ENCODE measurements at regions of chr10 and their contacts with region 1.

Region 1: GRCh38 chr10:88835096-88835909 is 16.3 kb downstream of the ANKRD22 start:
- DNase-seq: peak; percentile 95
- H3K4me3 Mint-ChIP-seq: no peak overlapping the region
- H3K27ac Mint-ChIP-seq: no peak overlapping the region
- H3K4me1 Mint-ChIP-seq: peaks cover 20% of the 10 kb centered on the region
- H3K27me3 Mint-ChIP-seq: no peaks in the 10 kb centered on the region

Region 2: GRCh38 chr10:88095223-88095721 is 740.0 kb before region 1 on chr10:
- CTCF ChIA-PET with region 1: no interaction called
- intact Hi-C with region 1: no loop called
- DNase-seq: no peak
- H3K4me3 Mint-ChIP-seq: no peak overlapping the region
- H3K27ac Mint-ChIP-seq: no peak overlapping the region
- H3K4me1 Mint-ChIP-seq: peaks cover 29% of the 10 kb centered on the region
- H3K27me3 Mint-ChIP-seq: peaks cover 20% of the 10 kb centered on the region

Region 3: GRCh38 chr10:88456730-88457129 is 378.6 kb before region 1 on chr10:
- CTCF ChIA-PET with region 1: no interaction called
- intact Hi-C with region 1: no loop called
- DNase-seq: no peak
- H3K4me3 Mint-ChIP-seq: no peak overlapping the region
- H3K27ac Mint-ChIP-seq: no peak overlapping the region
- H3K4me1 Mint-ChIP-seq: peaks cover 2% of the 10 kb centered on the region
- H3K27me3 Mint-ChIP-seq: no peaks in the 10 kb centered on the region

Region 4: DNA sequence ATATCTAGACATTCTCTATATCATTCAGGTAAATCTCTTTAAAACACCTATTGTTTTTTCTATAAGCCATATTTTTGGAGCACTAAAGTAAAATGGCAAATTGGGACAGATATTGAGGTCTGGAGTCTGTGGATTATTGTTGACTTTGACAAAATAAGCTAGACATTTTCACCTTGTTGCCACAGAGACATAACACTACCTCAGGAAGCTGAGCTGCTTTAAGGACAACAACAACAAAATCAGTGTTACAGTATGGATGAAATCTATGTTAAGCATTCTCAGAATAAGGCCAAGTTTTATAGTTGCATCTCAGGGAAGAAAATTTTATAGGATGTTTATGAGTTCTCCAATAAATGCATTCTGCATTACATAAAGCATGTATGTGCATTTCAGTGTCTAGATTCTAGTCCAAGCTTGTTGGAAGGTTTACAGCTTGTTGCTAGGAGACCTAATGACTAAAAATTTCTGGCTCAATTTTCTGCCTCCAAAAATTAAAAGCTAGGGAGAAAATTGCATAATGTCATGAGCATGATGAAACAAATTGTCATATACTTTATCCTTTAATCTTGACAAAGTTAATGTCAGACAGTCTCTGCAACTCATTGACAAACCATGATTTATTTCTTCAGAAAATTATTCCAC is 14.4 kb before region 1 on chr10:
- CTCF ChIA-PET with region 1: interaction called, 45 read pairs
- intact Hi-C with region 1: no loop called
- DNase-seq: no peak
- H3K4me3 Mint-ChIP-seq: no peak overlapping the region
- H3K27ac Mint-ChIP-seq: no peak overlapping the region
- H3K4me1 Mint-ChIP-seq: peaks cover 27% of the 10 kb centered on the region
- H3K27me3 Mint-ChIP-seq: no peaks in the 10 kb centered on the region

Region 5: DNA sequence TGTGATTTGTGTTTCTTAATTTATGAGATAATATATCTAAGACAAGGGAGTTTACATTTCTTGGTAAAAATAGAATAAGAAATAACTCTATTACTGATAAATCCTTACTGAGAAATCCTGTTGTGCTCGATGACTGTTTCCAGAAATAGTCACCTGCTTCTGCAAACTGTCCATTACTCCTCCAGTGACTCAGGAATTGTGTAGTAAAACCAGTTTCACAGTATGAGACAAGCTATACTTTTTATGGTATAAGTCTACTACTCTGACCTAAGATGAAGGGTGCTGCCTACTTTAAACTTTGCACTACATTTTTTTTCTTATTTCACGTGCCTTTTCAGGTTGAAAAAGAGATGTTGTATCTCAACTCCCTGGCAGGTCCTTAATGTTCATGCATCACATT is 23.2 kb after region 1 on chr10:
- CTCF ChIA-PET with region 1: interaction called, 21 read pairs
- intact Hi-C with region 1: no loop called
- DNase-seq: no peak
- H3K4me3 Mint-ChIP-seq: no peak overlapping the region
- H3K27ac Mint-ChIP-seq: no peak overlapping the region
- H3K4me1 Mint-ChIP-seq: peaks cover 4% of the 10 kb centered on the region
- H3K27me3 Mint-ChIP-seq: peaks cover 10% of the 10 kb centered on the region

Region 6: GRCh38 chr10:88880282-88881076 is 45.2 kb after region 1 on chr10:
- CTCF ChIA-PET with region 1: interaction called, 26 read pairs
- intact Hi-C with region 1: loop called (anchors 1 kb)
- DNase-seq: peak; percentile 82
- H3K4me3 Mint-ChIP-seq: peak overlapping the region; percentile 95
- H3K27ac Mint-ChIP-seq: peak overlapping the region; percentile 97
- H3K4me1 Mint-ChIP-seq: peaks cover 58% of the 10 kb centered on the region
- H3K27me3 Mint-ChIP-seq: no peaks in the 10 kb centered on the region

Region 7: DNA sequence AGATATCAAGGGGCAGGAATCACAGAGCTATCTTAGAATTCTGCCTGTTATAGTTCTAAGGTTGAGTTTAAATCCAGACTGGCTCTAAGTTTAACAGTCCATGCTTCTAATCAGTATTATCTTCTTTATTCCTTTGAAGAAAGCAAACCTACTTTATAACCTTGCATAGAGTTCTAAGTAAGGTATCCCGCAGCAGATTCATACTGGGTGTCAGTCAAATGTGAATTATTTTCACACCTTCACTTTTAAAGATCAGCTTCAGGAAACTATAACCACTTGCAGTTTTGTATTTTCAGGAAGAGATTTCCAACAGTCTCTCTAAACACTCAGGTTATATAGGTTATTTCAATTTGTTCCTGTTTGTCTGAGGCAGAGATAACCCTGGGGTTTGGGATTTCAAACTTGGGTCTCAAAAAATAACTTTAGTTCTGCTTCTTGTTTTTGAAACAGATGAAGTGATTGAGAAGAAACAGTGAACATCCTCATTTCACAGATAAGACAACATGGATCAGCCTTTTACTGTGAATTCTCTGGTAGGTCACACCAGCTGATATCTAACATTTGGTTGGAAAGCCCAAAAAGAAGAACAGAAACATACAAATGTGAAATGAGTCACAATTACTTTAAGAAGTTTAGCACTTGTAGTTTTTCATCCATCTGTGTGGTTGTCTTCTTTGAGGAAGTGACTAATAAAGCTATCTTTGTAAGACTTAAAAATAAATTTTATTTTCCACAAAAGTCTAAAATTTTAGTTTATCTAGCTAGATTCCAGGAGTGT is 66.1 kb after region 1 on chr10:
- CTCF ChIA-PET with region 1: interaction called, 44 read pairs
- intact Hi-C with region 1: loop called (anchors 2 kb)
- DNase-seq: no peak
- H3K4me3 Mint-ChIP-seq: peak overlapping the region; percentile 2
- H3K27ac Mint-ChIP-seq: peak overlapping the region; percentile 82
- H3K4me1 Mint-ChIP-seq: peaks cover 59% of the 10 kb centered on the region
- H3K27me3 Mint-ChIP-seq: no peaks in the 10 kb centered on the region

Region 8: GRCh38 chr10:89029785-89030437 is 194.6 kb after region 1 on chr10:
- CTCF ChIA-PET with region 1: interaction called, 9 read pairs
- intact Hi-C with region 1: loop called (anchors 2 kb)
- DNase-seq: peak; percentile 85
- H3K4me3 Mint-ChIP-seq: no peak overlapping the region
- H3K27ac Mint-ChIP-seq: no peak overlapping the region
- H3K4me1 Mint-ChIP-seq: peaks cover 22% of the 10 kb centered on the region
- H3K27me3 Mint-ChIP-seq: no peaks in the 10 kb centered on the region

Measured in activated naive CD4-positive, alpha-beta T cell treated with anti-CD3 and anti-CD28 coated beads for 36 hours (primary cell).